ENCODE measurements at regions of chr12 and their contacts with region 1.

Region 1: DNA sequence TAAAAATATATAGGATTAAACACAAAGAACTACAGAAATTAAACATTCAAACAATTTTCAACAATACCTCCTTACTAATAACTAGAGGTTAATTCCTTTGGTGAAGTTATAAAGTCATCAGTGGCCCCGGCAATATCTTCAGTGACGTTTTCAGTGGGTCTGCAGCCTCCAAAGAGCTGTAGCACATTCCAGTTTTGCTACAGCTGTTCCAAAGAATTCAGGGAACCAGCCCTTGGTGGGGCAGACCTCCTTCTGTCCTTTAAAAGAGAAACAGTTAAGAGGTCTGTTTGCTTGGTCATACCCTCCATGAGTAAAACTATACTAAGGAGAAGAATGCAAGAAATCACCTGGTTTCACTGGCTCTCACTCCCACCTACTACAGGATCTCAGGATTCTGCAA is 99.2 kb upstream of the ZDHHC17 start:
- DNase-seq: no peak
- H3K4me3 ChIP-seq: no peak overlapping the region
- H3K27ac ChIP-seq: no peak overlapping the region
- H3K4me1 ChIP-seq: no peaks in the 10 kb centered on the region
- H3K27me3 ChIP-seq: no peaks in the 10 kb centered on the region
- CTCF ChIP-seq: no peak

Region 2: GRCh38 chr12:76755829-76756379 is 91.2 kb after region 1 on chr12:
- CTCF ChIA-PET with region 1: no interaction called
- POLR2A ChIA-PET with region 1: no interaction called
- intact Hi-C with region 1: no loop called
- DNase-seq: no peak
- H3K4me3 ChIP-seq: no peak overlapping the region
- H3K27ac ChIP-seq: no peak overlapping the region
- H3K4me1 ChIP-seq: no peaks in the 10 kb centered on the region
- H3K27me3 ChIP-seq: no peaks in the 10 kb centered on the region
- CTCF ChIP-seq: no peak

Region 3: GRCh38 chr12:78009031-78009430 is 1344.3 kb after region 1 on chr12:
- CTCF ChIA-PET with region 1: no interaction called
- POLR2A ChIA-PET with region 1: interaction called, 11 read pairs
- intact Hi-C with region 1: no loop called
- DNase-seq: no peak
- H3K4me3 ChIP-seq: no peak overlapping the region
- H3K27ac ChIP-seq: no peak overlapping the region
- H3K4me1 ChIP-seq: no peaks in the 10 kb centered on the region
- H3K27me3 ChIP-seq: no peaks in the 10 kb centered on the region
- CTCF ChIP-seq: no peak